ENCODE measurements at regions of chr16 and their contacts with region 1.

Region 1: GRCh38 chr16:87203060-87203656 is 114.0 kb downstream of the C16orf95 start:
- DNase-seq: peak; percentile 62
- H3K4me3 Mint-ChIP-seq: no peak overlapping the region
- H3K27ac Mint-ChIP-seq: no peak overlapping the region
- H3K4me1 Mint-ChIP-seq: peaks cover 5% of the 10 kb centered on the region
- H3K27me3 Mint-ChIP-seq: peaks cover 6% of the 10 kb centered on the region

Region 2: DNA sequence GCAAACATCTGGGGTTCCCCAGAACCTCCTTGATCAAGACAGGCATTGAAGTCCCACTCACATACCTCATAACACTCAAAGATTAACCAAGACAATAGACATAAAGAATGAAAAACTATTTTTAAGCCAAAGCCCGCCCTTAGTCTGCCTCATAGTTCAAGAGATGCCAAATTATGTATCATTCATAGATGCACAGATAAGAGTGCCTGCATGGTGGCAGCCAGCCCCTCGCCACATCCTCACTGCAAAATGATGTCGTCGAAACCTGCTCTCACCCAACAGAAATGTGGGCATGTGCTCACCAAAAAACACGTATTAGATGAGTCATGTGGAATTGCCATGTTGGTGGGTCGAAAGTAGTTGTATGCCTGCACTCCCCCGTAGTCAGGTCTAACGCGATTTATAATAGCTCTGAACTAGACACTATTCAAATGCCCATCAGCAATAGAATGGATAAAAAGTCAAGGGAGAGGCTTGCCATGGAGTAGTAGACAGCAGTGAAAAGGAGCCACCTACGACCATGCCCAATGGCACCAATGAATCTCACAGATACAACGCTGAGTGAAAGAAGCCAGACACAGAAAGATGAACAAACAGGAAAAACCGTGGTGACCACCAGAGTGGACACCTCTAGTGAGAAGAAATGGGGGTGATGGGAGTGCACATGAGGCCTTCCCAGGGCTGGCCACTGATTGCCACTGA is 49.3 kb after region 1 on chr16:
- CTCF ChIA-PET with region 1: no interaction called
- POLR2A ChIA-PET with region 1: no interaction called
- DNase-seq: no peak
- H3K4me3 Mint-ChIP-seq: no peak overlapping the region
- H3K27ac Mint-ChIP-seq: no peak overlapping the region
- H3K4me1 Mint-ChIP-seq: peaks cover 23% of the 10 kb centered on the region
- H3K27me3 Mint-ChIP-seq: no peaks in the 10 kb centered on the region

Region 3: GRCh38 chr16:87278191-87279095 is 75.3 kb after region 1 on chr16:
- CTCF ChIA-PET with region 1: interaction called, 32 read pairs
- POLR2A ChIA-PET with region 1: no interaction called
- DNase-seq: peak; percentile 66
- H3K4me3 Mint-ChIP-seq: no peak overlapping the region
- H3K27ac Mint-ChIP-seq: no peak overlapping the region
- H3K4me1 Mint-ChIP-seq: peaks cover 26% of the 10 kb centered on the region
- H3K27me3 Mint-ChIP-seq: no peaks in the 10 kb centered on the region